ENCODE measurements at regions of chr2 and their contacts with region 1.

Region 1: DNA sequence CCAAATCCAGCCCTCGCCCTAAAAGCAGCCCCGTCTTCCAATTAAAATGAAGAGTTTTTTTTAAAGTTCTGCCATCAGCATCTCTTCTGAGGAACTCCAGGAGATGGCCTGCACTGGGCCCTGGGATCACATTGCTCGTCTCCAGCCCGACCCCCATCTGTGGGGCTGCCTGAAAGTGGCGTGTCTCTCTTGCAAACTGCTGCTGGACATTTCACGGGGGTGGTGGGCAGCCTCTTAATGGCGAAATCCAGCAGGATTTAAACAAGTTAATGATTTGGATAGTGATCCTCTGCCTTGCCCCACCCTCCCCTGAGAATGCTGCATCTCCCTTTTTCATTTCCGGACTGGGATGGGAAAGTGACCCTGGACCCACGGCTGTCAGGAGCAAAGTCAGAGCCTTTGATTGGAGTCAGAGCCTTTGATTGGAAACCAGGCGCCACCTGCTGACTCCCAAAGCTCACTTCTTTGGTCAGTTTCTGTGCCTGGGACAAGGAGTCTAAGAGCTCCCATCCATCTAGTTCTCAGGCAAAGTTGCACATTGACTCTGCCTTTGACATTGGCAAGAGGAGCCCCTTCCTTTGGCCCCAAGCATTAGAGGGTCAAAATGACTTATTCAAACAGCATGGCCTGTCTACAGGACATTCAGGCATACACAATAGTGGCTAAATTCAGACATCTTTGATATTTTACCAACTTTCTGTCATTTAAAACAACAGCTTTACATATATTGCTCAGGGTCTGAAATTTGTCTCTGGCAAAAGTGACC is 155.2 kb downstream of the SH3BP4 start:
- DNase-seq: peak; percentile 70
- H3K4me3 ChIP-seq: no peak overlapping the region
- H3K27ac ChIP-seq: no peak overlapping the region
- H3K4me1 ChIP-seq: no peaks in the 10 kb centered on the region
- H3K27me3 ChIP-seq: no peaks in the 10 kb centered on the region
- CTCF ChIP-seq: peak; percentile 74 to 84
- POLR2A ChIP-seq: no peak

Region 2: GRCh38 chr2:234550511-234551107 is 556.4 kb before region 1 on chr2:
- CTCF ChIA-PET with region 1: interaction called, 98 read pairs
- POLR2A ChIA-PET with region 1: no interaction called
- dilution Hi-C with region 1: loop called (anchors 25 kb)
- intact Hi-C with region 1: loop called (anchors 1 kb)
- DNase-seq: peak; percentile 76
- H3K4me3 ChIP-seq: no peak overlapping the region
- H3K27ac ChIP-seq: no peak overlapping the region
- H3K4me1 ChIP-seq: no peaks in the 10 kb centered on the region
- H3K27me3 ChIP-seq: peaks cover 0 to 6% of the 10 kb centered on the region in 2 experiments
- CTCF ChIP-seq: peak; percentile 84 to 87
- POLR2A ChIP-seq: no peak

Region 3: DNA sequence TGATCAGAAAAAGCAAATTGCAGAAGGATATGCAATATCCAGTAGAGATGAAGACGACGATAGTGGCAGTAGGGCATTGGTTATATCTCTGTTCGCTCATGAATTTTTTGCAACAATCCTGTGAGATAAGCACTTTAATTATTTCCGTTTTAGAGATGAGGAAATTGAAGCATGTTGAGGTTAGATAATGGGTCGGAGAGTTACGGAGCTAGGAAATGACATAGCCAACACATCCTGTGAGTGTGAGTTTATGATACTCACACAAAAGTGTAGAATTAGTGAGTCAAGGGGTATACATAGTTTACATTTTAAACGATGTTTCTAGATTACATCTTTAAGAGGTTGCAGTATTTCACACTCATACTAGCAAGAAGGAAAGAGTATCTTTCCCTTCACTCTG is 487.0 kb before region 1 on chr2:
- CTCF ChIA-PET with region 1: interaction called, 6 read pairs
- POLR2A ChIA-PET with region 1: no interaction called
- dilution Hi-C with region 1: no loop called
- intact Hi-C with region 1: loop called (anchors 5 kb)
- DNase-seq: peak; percentile 84
- H3K4me3 ChIP-seq: no peak overlapping the region
- H3K27ac ChIP-seq: no peak overlapping the region
- H3K4me1 ChIP-seq: peaks cover 20% of the 10 kb centered on the region
- H3K27me3 ChIP-seq: peaks cover 34 to 41% of the 10 kb centered on the region in 2 experiments
- CTCF ChIP-seq: no peak
- POLR2A ChIP-seq: peak; percentile 73

Region 4: DNA sequence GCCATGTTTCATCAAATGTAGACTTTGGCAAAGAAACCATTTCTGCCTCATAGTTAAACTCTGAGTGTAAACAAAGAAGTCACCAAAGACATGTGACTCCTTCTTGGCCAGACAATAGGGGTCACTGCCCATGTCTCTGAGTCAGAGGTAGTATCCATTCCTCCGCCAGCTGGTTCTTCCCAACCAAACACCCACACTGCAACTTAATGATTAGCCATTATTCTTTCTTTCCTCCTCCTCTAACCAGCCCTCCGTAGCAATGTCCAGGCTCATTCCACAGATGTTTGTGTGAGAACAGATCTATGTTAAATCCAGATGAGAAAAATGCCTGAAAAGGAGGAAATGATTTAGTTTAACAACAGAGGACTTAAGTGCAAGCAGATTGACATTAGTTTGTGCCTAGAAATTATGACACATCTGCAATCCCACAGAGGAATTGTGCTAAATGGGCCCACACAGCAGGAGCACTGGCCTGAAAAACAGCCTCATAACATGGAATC is 283.1 kb before region 1 on chr2:
- CTCF ChIA-PET with region 1: interaction called, 3 read pairs
- POLR2A ChIA-PET with region 1: no interaction called
- dilution Hi-C with region 1: no loop called
- intact Hi-C with region 1: loop called (anchors 5 kb)
- DNase-seq: peak; percentile 98
- H3K4me3 ChIP-seq: no peak overlapping the region
- H3K27ac ChIP-seq: peak overlapping the region; percentile 90
- H3K4me1 ChIP-seq: peaks cover 24% of the 10 kb centered on the region
- H3K27me3 ChIP-seq: no peaks in the 10 kb centered on the region
- CTCF ChIP-seq: no peak
- POLR2A ChIP-seq: peak; percentile 69

Region 5: GRCh38 chr2:234981197-234982117 is 125.6 kb before region 1 on chr2:
- CTCF ChIA-PET with region 1: interaction called, 12 read pairs
- POLR2A ChIA-PET with region 1: no interaction called
- dilution Hi-C with region 1: no loop called
- intact Hi-C with region 1: no loop called
- DNase-seq: peak; percentile 99
- H3K4me3 ChIP-seq: peak overlapping the region in 2 of 3 experiments; percentile 37 to 53
- H3K27ac ChIP-seq: peak overlapping the region; percentile 97
- H3K4me1 ChIP-seq: peaks cover 76% of the 10 kb centered on the region
- H3K27me3 ChIP-seq: no peaks in the 10 kb centered on the region
- CTCF ChIP-seq: peak in 1 of 2 donors; percentile 4
- POLR2A ChIP-seq: peak; percentile 46

Region 6: DNA sequence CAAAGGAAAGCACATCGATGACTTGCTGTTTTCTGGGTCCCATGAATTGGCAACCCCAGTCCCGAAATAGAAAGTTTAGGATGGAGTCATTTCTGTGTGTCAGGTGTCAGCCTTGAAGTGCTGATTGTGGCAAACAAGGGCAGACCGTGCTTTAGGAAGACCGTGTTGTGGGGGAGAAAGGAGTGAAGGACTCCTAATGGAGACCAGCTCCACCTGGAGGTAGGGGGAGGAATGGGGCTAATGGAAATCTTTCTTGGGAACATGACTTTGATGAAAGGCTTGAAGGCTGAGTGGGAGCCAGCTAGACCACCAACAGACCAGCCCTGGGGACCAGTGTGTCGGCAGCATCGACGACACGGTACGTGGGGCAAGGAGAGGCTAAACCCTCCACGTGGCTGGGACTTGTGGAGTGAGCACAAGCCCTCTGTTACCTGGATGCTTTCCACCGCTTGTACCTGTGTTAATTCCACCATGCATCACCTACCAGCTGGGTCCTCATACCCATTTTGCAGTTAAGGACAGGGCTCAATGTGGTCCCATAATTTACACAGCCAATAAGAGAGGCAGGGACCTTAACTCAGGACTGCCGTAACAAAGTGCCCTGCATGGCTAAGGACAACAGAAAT is 51.1 kb before region 1 on chr2:
- CTCF ChIA-PET with region 1: interaction called, 6 read pairs
- POLR2A ChIA-PET with region 1: no interaction called
- dilution Hi-C with region 1: no loop called
- intact Hi-C with region 1: loop called (anchors 2 kb)
- DNase-seq: peak; percentile 44
- H3K4me3 ChIP-seq: no peak overlapping the region
- H3K27ac ChIP-seq: no peak overlapping the region
- H3K4me1 ChIP-seq: peaks cover 21% of the 10 kb centered on the region
- H3K27me3 ChIP-seq: no peaks in the 10 kb centered on the region
- CTCF ChIP-seq: peak; percentile 38 to 50
- POLR2A ChIP-seq: no peak

Region 7: DNA sequence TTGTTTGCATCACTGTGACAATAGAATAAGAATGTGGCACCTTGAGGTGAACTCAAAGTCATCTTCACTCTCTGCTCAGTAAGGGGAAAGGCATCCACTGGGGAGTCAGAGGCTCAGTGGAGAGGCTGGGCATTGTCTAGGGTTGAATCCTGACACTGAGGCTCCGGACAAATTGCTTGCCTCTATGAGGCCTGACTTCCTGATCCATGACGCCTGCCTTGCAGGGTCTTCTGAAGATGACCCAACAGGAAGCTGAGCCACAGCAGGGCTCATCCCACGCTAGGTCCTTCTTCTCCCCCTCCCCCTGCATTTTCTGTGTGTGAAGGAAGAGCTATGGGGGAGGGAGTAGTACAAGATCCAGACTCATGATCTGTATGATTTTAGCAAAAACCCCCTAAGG is 109.8 kb after region 1 on chr2:
- CTCF ChIA-PET with region 1: no interaction called
- POLR2A ChIA-PET with region 1: no interaction called
- dilution Hi-C with region 1: no loop called
- intact Hi-C with region 1: no loop called
- DNase-seq: no peak
- H3K4me3 ChIP-seq: no peak overlapping the region
- H3K27ac ChIP-seq: no peak overlapping the region
- H3K4me1 ChIP-seq: no peaks in the 10 kb centered on the region
- H3K27me3 ChIP-seq: peaks cover 0 to 4% of the 10 kb centered on the region in 2 experiments
- CTCF ChIP-seq: no peak
- POLR2A ChIP-seq: no peak

Measured in endothelial cell of umbilical vein (primary cell).